ENCODE measurements at regions of chr22 and their contacts with region 1.

Region 1: GRCh38 chr22:17554814-17555213 is 8.5 kb upstream of the SLC25A18 start:
- DNase-seq: no peak
- H3K4me3 Mint-ChIP-seq: no peak overlapping the region
- H3K27ac Mint-ChIP-seq: no peak overlapping the region
- H3K4me1 Mint-ChIP-seq: no peaks in the 10 kb centered on the region
- H3K27me3 Mint-ChIP-seq: no peaks in the 10 kb centered on the region
- CTCF ChIP-seq: no peak

Region 2: DNA sequence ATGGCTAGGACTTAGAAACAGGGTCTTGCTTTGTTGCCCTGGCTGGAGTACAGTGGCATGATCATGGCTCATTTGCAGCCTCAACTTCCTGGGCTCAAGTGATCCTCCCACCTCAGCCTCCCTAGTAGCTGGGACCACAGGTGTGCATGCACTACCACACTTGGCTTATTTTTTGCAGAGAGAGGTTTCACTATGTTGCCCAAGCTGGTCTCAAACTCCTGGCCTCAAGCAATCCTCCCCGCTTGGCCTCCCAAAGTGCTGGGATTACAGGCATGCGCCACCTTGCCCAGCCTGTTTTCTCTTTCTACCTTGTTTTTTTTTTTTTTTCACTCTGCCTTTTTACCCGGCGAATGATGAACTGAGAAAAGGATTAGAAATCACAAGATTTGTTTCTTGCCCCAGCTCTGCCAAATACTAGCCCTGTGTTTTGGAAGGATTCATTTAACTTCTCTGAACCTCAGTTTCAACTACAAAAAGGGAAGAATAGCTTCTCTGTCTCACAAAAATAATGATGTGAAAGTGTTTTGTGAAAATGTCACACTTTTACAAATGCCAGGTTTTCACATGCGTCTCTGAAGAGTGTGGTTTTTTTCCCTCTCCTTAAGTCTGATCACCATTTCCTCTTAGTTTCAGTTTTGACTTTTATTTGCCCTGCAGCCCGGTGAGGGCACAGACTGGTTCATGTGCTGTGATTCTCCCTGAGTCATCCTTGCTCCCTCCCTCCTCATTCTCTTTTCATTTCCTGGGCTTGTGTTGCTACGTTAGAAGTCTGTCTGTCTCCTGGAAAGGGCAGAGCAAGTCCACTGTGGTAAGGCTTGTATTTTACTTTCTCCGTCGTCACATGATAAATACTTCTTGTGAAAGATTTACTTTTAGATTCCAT is 151.4 kb after region 1 on chr22:
- CTCF ChIA-PET with region 1: interaction called, 10 read pairs
- POLR2A ChIA-PET with region 1: interaction called, 13 read pairs
- intact Hi-C with region 1: loop called (anchors 5 kb)
- DNase-seq: peak; percentile 92
- H3K4me3 Mint-ChIP-seq: peak overlapping the region; percentile 79
- H3K27ac Mint-ChIP-seq: peak overlapping the region; percentile 87
- H3K4me1 Mint-ChIP-seq: peaks cover 17% of the 10 kb centered on the region
- H3K27me3 Mint-ChIP-seq: no peaks in the 10 kb centered on the region
- CTCF ChIP-seq: no peak